ENCODE measurements at regions of chrX and their contacts with region 1.

Region 1: GRCh38 chrX:77597090-77597489 is 149.9 kb downstream of the FGF16 start:
- DNase-seq: no peak
- H3K4me3 ChIP-seq: no peak overlapping the region
- H3K27ac ChIP-seq: no peak overlapping the region
- H3K4me1 ChIP-seq: no peaks in the 10 kb centered on the region
- H3K27me3 ChIP-seq: no peaks in the 10 kb centered on the region
- CTCF ChIP-seq: peak; percentile 65

Region 2: GRCh38 chrX:76172325-76172893 is 1424.7 kb before region 1 on chrX:
- CTCF ChIA-PET with region 1: no interaction called
- POLR2A ChIA-PET with region 1: interaction called, 26 read pairs
- intact Hi-C with region 1: no loop called
- DNase-seq: no peak
- H3K4me3 ChIP-seq: peak overlapping the region; percentile 74
- H3K27ac ChIP-seq: peak overlapping the region; percentile 84
- H3K4me1 ChIP-seq: peaks cover 14% of the 10 kb centered on the region
- H3K27me3 ChIP-seq: no peaks in the 10 kb centered on the region
- CTCF ChIP-seq: no peak

Region 3: DNA sequence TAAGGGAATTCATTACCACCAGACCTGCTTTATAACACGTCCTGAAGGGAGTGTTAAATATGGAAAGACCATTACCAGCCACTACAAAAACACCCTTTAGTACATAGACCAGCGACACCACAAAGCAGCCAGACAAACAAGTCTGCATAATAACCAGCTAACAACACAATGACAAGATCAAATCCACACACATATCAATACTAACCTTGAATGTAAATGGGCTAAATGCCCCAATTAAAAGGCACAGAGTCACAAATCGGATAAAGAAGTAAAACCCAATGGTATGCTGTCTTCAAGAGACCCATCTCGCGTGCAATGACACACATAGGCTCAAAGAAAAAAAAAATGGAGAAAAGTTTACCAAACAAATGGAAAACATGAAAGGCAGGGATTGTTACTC is 113.0 kb before region 1 on chrX:
- CTCF ChIA-PET with region 1: no interaction called
- POLR2A ChIA-PET with region 1: no interaction called
- intact Hi-C with region 1: no loop called
- DNase-seq: no peak
- H3K4me3 ChIP-seq: no peak overlapping the region
- H3K27ac ChIP-seq: no peak overlapping the region
- H3K4me1 ChIP-seq: no peaks in the 10 kb centered on the region
- H3K27me3 ChIP-seq: no peaks in the 10 kb centered on the region
- CTCF ChIP-seq: no peak

Region 4: GRCh38 chrX:77622233-77622632 is 25.1 kb after region 1 on chrX:
- CTCF ChIA-PET with region 1: no interaction called
- POLR2A ChIA-PET with region 1: interaction called, 10 read pairs
- intact Hi-C with region 1: no loop called
- DNase-seq: no peak
- H3K4me3 ChIP-seq: no peak overlapping the region
- H3K27ac ChIP-seq: no peak overlapping the region
- H3K4me1 ChIP-seq: no peaks in the 10 kb centered on the region
- H3K27me3 ChIP-seq: no peaks in the 10 kb centered on the region
- CTCF ChIP-seq: no peak

Measured in PC-9 (cell line).